Endothelial cell of umbilical vein (primary cell): ENCODE measurements at regions of chr12 and their contacts with region 1.

Region 1: GRCh38 chr12:92145731-92146496 is at the start of gene BTG1:
- DNase-seq: peak; percentile 100
- H3K4me3 ChIP-seq: peak within 1 kb of the TSS; percentile 53 to 86 (median 85)
- H3K27ac ChIP-seq: peak within 1 kb of the TSS; percentile 80
- H3K4me1 ChIP-seq: peaks cover 19% of the 10 kb centered on the region
- H3K27me3 ChIP-seq: no peaks in the 10 kb centered on the region
- CTCF ChIP-seq: peak in 1 of 2 donors; percentile 1
- POLR2A ChIP-seq: peak; percentile 100
- total RNA-seq, gene BTG1: 89.5 and 104 TPM in 2 replicates

Region 2: DNA sequence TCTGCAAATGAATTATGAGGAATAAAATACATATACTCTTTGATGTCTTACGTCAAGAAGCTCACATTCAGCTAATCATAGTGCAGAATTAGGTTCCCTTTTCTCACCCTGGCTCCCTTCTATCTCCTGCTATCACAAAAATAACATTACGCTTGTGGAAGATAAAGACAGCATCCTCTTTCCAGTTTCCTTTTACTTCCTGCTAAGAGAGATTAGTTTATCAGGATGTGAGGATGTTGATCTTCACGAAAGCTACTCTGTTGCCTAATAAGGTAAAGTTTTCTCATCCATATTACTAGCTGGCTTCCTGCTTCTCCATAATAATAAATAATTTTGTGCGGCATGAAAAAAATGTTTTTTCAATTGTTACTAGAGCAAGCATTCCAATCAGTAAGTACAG is 745.6 kb before region 1 on chr12:
- CTCF ChIA-PET with region 1: no interaction called
- POLR2A ChIA-PET with region 1: interaction called, 3 read pairs
- dilution Hi-C with region 1: no loop called
- intact Hi-C with region 1: loop called (anchors 1 kb)
- DNase-seq: peak; percentile 93
- H3K4me3 ChIP-seq: no peak overlapping the region
- H3K27ac ChIP-seq: peak overlapping the region; percentile 48
- H3K4me1 ChIP-seq: peaks cover 22% of the 10 kb centered on the region
- H3K27me3 ChIP-seq: no peaks in the 10 kb centered on the region
- CTCF ChIP-seq: no peak
- POLR2A ChIP-seq: no peak

Region 3: GRCh38 chr12:91926848-91927247 is 219.1 kb before region 1 on chr12:
- CTCF ChIA-PET with region 1: interaction called, 3 read pairs
- POLR2A ChIA-PET with region 1: interaction called, 4 read pairs
- dilution Hi-C with region 1: no loop called
- intact Hi-C with region 1: loop called (anchors 5 kb)
- DNase-seq: peak; percentile 85
- H3K4me3 ChIP-seq: no peak overlapping the region
- H3K27ac ChIP-seq: peak overlapping the region; percentile 24
- H3K4me1 ChIP-seq: peaks cover 10% of the 10 kb centered on the region
- H3K27me3 ChIP-seq: no peaks in the 10 kb centered on the region
- CTCF ChIP-seq: no peak
- POLR2A ChIP-seq: no peak

Region 4: DNA sequence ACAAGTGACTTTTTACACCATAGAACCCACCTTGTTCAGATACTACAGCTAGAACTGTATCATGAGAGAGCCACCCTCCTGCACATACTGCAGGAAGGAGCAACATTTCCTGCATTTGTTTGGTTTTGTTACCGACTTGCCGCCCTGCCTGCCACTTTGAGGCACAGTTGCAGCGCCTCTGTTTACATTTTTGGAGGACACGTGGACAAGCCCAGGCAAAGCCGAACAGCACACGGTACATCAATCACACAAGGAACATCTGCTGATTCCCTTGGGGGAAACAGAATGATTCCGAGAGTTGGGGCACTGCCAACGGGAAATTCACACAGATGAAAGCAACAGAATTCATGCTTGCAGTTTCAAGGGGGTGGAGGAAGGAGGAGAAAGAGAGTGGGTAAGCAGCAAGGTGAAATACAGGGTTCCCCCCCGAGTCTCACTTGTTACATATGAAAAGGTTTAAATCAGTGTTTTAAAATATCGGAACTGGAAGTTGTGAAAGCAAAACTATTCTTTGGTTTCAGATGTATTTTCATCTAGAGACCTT is 111.0 kb before region 1 on chr12:
- CTCF ChIA-PET with region 1: interaction called, 3 read pairs
- POLR2A ChIA-PET with region 1: interaction called, 10 read pairs
- dilution Hi-C with region 1: no loop called
- intact Hi-C with region 1: no loop called
- DNase-seq: peak; percentile 87
- H3K4me3 ChIP-seq: peak overlapping the region in 1 of 3 experiments; percentile 21
- H3K27ac ChIP-seq: peak overlapping the region; percentile 22
- H3K4me1 ChIP-seq: peaks cover 17% of the 10 kb centered on the region
- H3K27me3 ChIP-seq: no peaks in the 10 kb centered on the region
- CTCF ChIP-seq: no peak
- POLR2A ChIP-seq: no peak

Region 5: DNA sequence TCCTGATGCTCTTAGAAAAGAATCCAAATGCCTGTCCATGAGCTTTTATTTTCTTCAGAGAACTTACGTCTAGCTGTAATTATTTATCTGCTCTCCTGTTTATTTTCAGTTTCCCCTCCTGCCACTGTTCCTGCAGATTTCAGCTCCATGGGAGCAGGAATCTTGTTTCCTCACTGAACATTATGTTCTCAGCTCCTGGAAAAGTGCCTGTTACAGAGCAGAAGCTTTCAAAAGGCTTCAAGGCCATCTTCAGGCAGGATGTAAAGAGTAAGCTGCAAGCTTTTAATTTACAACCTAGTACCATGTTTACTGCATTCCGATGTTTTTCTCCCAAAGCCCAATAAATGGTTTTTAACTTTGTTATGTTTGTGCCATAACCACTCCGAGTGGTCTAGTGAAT is 98.1 kb after region 1 on chr12:
- CTCF ChIA-PET with region 1: interaction called, 10 read pairs
- POLR2A ChIA-PET with region 1: interaction called, 4 read pairs
- dilution Hi-C with region 1: no loop called
- intact Hi-C with region 1: no loop called
- DNase-seq: peak; percentile 74
- H3K4me3 ChIP-seq: no peak overlapping the region
- H3K27ac ChIP-seq: no peak overlapping the region
- H3K4me1 ChIP-seq: no peaks in the 10 kb centered on the region
- H3K27me3 ChIP-seq: no peaks in the 10 kb centered on the region
- CTCF ChIP-seq: no peak
- POLR2A ChIP-seq: no peak

Region 6: GRCh38 chr12:92272061-92272964 is 126.4 kb after region 1 on chr12:
- CTCF ChIA-PET with region 1: no interaction called
- POLR2A ChIA-PET with region 1: no interaction called
- dilution Hi-C with region 1: no loop called
- intact Hi-C with region 1: no loop called
- DNase-seq: no peak
- H3K4me3 ChIP-seq: no peak overlapping the region
- H3K27ac ChIP-seq: no peak overlapping the region
- H3K4me1 ChIP-seq: no peaks in the 10 kb centered on the region
- H3K27me3 ChIP-seq: peaks cover 0 to 2% of the 10 kb centered on the region in 2 experiments
- CTCF ChIP-seq: no peak
- POLR2A ChIP-seq: no peak

Region 7: DNA sequence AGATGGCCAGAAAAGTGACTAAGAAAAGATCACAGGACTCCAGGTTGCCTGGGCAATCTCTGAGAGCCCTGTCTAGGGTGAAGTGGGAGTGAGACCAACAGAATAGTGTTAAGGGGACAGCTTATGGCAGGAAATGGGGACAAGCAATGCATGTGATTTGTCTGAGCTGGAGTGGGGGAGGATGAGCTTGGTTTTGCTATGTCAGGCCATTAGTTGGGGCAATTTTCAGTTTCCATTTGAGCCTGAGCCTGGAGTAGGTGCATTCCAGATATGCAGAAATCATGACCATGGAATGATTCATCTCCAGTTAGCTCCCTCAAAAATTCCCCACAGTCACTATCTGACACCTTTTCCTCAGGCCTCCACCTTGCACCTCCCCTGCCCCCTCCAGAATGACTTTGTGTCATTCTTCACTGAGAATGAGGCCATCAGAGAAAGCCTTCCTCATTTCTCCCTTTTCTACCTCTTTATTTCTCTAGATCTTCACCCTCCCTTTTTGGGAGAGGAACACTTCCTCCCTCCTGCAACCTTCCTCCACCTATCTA is 406.0 kb after region 1 on chr12:
- CTCF ChIA-PET with region 1: no interaction called
- POLR2A ChIA-PET with region 1: interaction called, 4 read pairs
- dilution Hi-C with region 1: no loop called
- intact Hi-C with region 1: loop called (anchors 5 kb)
- DNase-seq: no peak
- H3K4me3 ChIP-seq: no peak overlapping the region
- H3K27ac ChIP-seq: no peak overlapping the region
- H3K4me1 ChIP-seq: peaks cover 6% of the 10 kb centered on the region
- H3K27me3 ChIP-seq: peaks cover 0 to 5% of the 10 kb centered on the region in 2 experiments
- CTCF ChIP-seq: no peak
- POLR2A ChIP-seq: no peak